ENCODE measurements at regions of chr2 and their contacts with region 1.

Region 1: DNA sequence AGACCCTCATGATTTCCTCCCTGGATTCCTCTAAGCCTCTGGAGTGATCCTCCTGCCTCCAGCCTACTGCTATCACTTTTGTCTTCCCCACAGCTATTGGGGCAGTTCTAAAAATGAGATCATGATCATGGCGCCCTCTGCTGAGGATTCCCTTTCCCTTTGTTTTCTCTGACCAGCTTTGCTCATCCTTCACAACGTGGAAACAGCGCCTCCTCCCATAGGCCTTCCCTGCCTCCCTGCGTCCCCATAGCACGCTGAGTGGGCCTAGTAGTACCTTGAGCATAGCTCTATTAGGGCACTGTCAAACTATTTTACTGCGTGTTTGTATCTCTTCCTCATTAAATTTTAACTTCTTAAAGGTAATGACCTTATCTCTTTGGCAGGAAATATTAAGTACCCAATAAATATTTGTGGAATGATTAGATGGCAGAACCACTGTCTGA is 207.0 kb upstream of the FANCL start:
- DNase-seq: peak; percentile 9
- H3K4me3 Mint-ChIP-seq: no peak overlapping the region
- H3K27ac Mint-ChIP-seq: no peak overlapping the region
- H3K4me1 Mint-ChIP-seq: no peaks in the 10 kb centered on the region
- H3K27me3 Mint-ChIP-seq: peaks cover 3% of the 10 kb centered on the region

Region 2: GRCh38 chr2:57759822-57760300 is 688.2 kb before region 1 on chr2:
- intact Hi-C with region 1: loop called (anchors 2 kb)
- DNase-seq: peak; percentile 45
- H3K4me3 Mint-ChIP-seq: no peak overlapping the region
- H3K27ac Mint-ChIP-seq: no peak overlapping the region
- H3K4me1 Mint-ChIP-seq: no peaks in the 10 kb centered on the region
- H3K27me3 Mint-ChIP-seq: no peaks in the 10 kb centered on the region

Region 3: DNA sequence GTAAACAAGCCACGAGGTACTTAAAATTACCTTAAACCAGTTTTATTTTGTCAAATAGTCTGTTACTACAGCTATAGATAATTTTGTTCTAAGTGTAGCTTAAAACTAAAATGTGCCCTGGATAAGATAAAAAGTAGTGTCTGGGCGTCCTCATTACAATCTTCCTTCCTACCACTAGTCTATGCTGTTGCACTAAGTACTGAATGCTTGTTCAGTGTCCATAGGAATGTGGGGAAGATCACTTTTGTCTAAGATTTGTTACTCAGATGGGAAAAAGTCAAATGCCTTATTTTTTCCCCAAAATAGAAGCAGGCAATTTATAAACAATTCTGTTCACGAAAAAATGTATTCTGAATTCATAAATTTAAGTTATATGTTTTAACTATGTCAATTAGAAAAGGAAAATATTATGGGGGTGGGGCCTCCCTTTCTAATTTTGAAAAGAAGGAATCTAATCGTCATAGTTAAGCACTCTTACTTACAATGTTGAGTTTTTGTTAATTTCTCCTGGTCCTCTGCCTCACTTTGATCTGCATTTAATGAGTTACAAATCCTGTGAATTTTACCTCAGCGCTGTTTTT is 541.8 kb before region 1 on chr2:
- intact Hi-C with region 1: loop called (anchors 1 kb)
- DNase-seq: no peak
- H3K4me3 Mint-ChIP-seq: no peak overlapping the region
- H3K27ac Mint-ChIP-seq: no peak overlapping the region
- H3K4me1 Mint-ChIP-seq: peaks cover 2% of the 10 kb centered on the region
- H3K27me3 Mint-ChIP-seq: no peaks in the 10 kb centered on the region

Measured in activated T-helper 2 cell treated with anti-CD3 and anti-CD28 coated beads, Interferon-gamma antibody, Interleukin-2, Interleukin-4, amounts not matched to agents 10 μg/mL and 5 μg/mL and 100 μg/mL, durations not matched to agents 14 hours and 24 hours and 36 hours (primary cell).